ENCODE measurements at regions of chr12 and their contacts with region 1.

Region 1: GRCh38 chr12:49580572-49581535 is 12.9 kb upstream of the MCRS1 start:
- DNase-seq: peak; percentile 83 to 86
- ATAC-seq: peak; percentile 95 to 98
- H3K4me3 ChIP-seq: no peak overlapping the region
- H3K27ac ChIP-seq: 0 out of 6 replicates have a peak overlapping the region, but pooled peaks of 1 of the 2 experiments have one; percentile 22
- H3K4me1 ChIP-seq: peaks cover 16% of the 10 kb centered on the region; the same call in 2 of the 3 replicates
- CTCF ChIP-seq: peak; percentile 81
- EP300 ChIP-seq: no peak
- POLR2A ChIP-seq: no peak
- RAD21 ChIP-seq: peak; percentile 83 to 90

Region 2: GRCh38 chr12:49462083-49462744 is 118.6 kb before region 1 on chr12:
- CTCF ChIA-PET with region 1: no interaction called
- POLR2A ChIA-PET with region 1: no interaction called
- DNase-seq: no peak
- ATAC-seq: peak in 1 of 2 experiments; percentile 34; a peak in 2 of 6 replicates
- H3K4me3 ChIP-seq: no peak overlapping the region
- H3K27ac ChIP-seq: peak overlapping the region in 1 of 2 experiments; percentile 54; a peak in 2 of 6 replicates
- H3K4me1 ChIP-seq: no peaks in the 10 kb centered on the region
- CTCF ChIP-seq: no peak
- EP300 ChIP-seq: no peak
- POLR2A ChIP-seq: no peak
- RAD21 ChIP-seq: no peak

Region 3: DNA sequence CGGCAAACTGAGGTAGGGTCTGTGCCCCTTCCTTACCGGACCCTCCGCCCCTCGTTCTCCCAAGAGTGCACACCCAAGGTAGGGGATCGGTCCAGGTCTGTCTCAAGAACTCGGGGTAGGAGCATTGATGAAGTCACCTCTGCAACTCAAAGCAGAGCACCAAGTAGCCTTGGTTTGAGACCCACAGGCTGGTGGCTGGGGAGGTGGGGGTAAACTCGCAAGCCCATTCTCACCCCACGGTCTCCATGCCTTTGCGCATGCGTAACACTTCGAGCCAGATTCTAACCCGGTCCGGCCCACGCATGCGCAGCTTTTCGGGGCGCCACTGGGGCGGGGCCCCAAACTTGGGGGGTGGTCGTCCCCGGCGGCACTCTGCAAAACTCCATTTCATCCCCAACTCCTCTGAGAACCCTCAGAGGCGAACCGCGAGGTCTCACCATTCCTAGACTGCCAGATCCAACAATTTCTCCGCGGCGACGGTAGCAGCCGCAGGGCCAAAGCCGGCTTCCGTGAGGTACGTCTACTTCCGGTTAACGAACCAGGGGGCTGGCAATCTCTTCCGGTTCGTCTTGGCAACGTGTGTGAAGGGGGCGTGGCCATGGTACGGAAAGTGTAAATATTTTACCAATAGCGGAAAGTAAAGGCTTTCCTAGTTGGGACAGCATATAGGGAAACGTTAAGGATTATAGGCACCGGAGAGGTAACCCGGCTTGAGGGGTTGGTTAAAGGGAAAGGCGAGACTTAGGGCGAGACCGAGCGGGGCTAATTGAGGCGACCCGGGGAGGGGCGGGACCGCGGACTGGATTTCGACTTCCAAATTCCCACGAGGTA is 13.0 kb before region 1 on chr12 and contains the start of gene MCRS1:
- CTCF ChIA-PET with region 1: interaction called, 58 read pairs
- POLR2A ChIA-PET with region 1: interaction called, 7 read pairs
- DNase-seq: peak; percentile 94 to 99
- ATAC-seq: peak; percentile 89 to 90
- H3K4me3 ChIP-seq: peak within 1 kb of the TSS; percentile 65
- H3K27ac ChIP-seq: peak within 1 kb of the TSS; percentile 95 to 99
- H3K4me1 ChIP-seq: peaks cover 13% of the 10 kb centered on the region
- CTCF ChIP-seq: no peak
- EP300 ChIP-seq: no peak
- POLR2A ChIP-seq: peak; percentile 63
- RAD21 ChIP-seq: no peak
- polyA plus RNA-seq, gene MCRS1: 68.5 and 69.4 TPM in 2 replicates

Region 4: DNA sequence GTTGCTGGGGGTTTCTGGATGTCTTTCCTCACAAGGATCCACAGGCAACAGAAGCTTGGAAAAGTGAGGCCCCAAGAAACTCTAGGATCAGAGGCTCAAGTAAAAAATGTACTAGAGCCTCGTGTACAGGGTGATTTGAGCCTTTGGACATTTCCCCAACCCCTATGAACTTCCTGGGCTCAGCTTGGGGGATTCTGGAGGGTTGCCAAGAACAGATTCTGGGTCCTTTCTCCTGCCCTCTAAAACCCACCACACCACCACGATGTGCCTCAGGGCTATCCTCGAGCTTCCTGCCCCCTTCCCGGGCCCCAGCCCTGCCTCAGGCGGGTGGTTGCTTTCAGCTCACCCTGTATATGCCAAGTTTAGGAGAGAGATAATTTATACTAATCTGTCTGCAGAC is 24.0 kb after region 1 on chr12:
- CTCF ChIA-PET with region 1: interaction called, 19 read pairs
- POLR2A ChIA-PET with region 1: no interaction called
- DNase-seq: no peak
- ATAC-seq: no peak
- H3K4me3 ChIP-seq: no peak overlapping the region
- H3K27ac ChIP-seq: no peak overlapping the region
- H3K4me1 ChIP-seq: no peaks in the 10 kb centered on the region
- CTCF ChIP-seq: no peak
- EP300 ChIP-seq: no peak
- POLR2A ChIP-seq: no peak
- RAD21 ChIP-seq: no peak

Region 5: DNA sequence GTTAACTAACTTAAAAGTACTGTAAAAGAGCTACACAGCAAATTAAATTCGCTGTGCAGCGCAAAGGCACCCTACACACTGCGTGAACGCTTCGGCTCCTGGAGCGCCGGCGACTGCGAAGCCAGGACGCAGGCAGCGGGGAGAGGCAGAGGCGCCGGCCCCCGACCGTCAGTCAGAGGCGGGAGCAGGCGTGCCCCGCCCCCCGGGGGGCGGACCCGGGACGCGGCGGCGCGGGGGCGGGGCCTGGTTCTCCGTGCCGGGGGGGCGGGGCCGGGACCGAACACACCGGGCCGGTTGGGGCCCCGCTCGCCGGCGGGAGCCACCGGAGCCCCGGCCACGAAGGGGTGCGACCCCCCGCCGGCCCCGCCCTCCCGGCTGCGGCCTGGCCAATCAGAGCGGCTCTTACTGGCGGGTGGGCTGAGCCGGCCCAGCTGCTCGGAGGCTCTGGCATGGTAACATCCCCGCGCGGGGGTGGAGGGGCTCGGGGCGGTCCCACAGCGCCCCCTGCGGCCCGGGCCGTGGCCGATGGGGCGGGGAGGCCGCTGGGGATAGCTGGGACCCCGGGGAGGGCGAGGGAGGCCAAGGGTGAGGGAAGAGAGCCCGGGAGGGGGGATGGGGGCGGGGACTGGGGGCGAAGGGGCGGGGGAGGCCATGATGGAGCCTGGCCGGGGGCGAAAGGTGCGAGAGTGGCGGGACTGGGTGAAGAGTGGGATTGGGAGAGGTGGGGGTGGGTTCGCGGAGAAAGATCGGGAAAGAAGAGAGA is 42.5 kb after region 1 on chr12 and contains the start of gene PRPF40B:
- CTCF ChIA-PET with region 1: interaction called, 12 read pairs
- POLR2A ChIA-PET with region 1: no interaction called
- DNase-seq: peak; percentile 87 to 95
- ATAC-seq: peak; percentile 88 to 89
- H3K4me3 ChIP-seq: peak within 1 kb of the TSS; percentile 63
- H3K27ac ChIP-seq: peak within 1 kb of the TSS; percentile 79 to 90
- H3K4me1 ChIP-seq: peaks cover 39% of the 10 kb centered on the region
- CTCF ChIP-seq: peak; percentile 64
- EP300 ChIP-seq: no peak
- POLR2A ChIP-seq: peak; percentile 93
- RAD21 ChIP-seq: peak; percentile 23 to 51; a peak in 3 of 5 replicates
- polyA plus RNA-seq, gene PRPF40B: 17.0 TPM in 2 replicates

Measured in A549 (cell line).